Breast epithelium (tissue), 4 donors: ENCODE measurements at regions of chr2 and their contacts with region 1.

Region 1: DNA sequence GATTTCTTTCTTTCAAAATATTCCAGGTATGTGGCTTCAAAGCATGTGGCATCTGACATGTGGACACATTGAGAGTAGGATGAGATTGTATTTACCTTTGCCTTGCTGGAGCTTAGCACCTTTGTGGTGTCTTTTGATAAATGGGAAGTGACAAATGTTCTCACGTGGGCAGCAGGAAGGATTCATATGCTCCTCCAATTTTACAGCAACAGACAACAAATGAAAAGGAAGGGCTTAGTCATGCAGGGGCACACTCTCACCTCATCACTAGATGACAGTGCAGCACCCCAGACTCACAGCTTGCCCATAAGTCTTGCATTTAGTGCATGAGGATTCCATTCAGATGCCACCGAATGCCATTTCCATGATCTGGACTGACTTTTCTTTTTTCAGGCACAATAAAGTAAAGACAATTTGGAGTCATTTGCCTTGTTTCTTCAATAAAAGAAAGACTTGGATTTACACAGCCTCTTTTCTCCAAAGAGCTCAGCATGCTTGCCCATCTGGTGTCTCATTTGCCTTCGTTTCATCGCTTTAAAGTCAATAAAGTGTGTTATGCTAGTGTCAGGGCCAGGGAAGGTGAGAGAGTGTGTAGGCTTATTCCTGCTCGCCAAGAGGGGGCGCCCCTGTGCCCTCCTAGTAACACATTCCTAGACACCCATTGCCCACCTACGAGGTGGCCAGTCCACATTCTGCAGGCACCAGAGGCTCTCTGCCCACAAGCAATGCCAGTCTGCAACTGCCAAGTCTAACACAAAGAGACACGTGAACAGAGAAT is 39.6 kb upstream of the DAPL1 start:
- DNase-seq: no peak
- H3K4me3 ChIP-seq: no peak overlapping the region
- H3K27ac ChIP-seq: no peak overlapping the region
- H3K4me1 ChIP-seq: peaks cover 0 to 6% of the 10 kb centered on the region in 2 donors
- H3K27me3 ChIP-seq: no peaks in the 10 kb centered on the region
- CTCF ChIP-seq: no peak
- POLR2A ChIP-seq: no peak

Region 2: GRCh38 chr2:158025255-158025996 is 730.1 kb before region 1 on chr2:
- intact Hi-C with region 1: loop called (anchors 5 kb)
- DNase-seq: no peak
- H3K4me3 ChIP-seq: no peak overlapping the region
- H3K27ac ChIP-seq: peak overlapping the region; percentile 67 to 71
- H3K4me1 ChIP-seq: no peaks in the 10 kb centered on the region
- H3K27me3 ChIP-seq: no peaks in the 10 kb centered on the region
- CTCF ChIP-seq: no peak
- POLR2A ChIP-seq: no peak